Posterior vena cava (tissue), 2 donors: ENCODE measurements at regions of chr7 and their contacts with region 1.

Region 1: DNA sequence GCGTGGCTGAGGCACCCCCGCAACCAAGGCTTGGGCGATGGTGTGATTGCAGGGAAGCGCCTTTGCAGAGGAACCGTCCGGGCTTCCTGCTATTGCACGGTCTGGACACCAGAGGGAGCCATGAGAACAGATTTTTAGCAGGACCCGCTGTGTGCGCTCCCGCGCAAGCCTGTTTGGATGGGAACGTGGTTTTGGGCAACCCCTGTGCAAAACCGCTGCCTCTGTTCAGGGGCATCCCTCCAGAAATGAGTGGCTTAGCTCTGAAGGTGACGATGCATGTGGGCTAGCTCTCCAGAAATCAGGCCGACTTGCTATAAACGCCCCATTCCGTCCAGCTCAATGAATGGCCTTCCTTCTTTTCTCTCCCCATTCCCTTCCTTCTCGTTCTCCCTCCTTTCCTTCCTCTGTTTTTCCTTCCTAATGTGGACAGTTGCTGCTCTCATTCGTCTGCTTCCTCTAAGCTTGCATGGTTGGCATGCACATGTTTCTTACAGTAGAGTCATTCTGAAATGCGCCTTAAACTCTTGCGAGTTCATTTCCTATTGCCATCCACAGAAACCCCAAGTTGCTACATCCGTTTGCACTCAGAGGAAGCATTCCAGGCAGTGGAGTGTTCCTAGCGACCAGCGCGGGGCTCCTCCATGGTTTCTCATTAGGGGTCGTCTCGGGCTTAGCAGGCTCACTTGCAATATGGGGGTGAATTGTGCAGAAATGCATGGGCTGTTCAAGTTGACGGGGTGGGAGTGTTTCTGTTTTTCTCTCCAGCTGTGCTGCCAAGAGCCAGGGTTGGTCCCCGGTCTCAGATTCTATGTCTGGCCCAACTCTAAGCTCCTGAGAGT is 302.5 kb upstream of the GALNT17 start:
- DNase-seq: peak; percentile 87

Region 2: DNA sequence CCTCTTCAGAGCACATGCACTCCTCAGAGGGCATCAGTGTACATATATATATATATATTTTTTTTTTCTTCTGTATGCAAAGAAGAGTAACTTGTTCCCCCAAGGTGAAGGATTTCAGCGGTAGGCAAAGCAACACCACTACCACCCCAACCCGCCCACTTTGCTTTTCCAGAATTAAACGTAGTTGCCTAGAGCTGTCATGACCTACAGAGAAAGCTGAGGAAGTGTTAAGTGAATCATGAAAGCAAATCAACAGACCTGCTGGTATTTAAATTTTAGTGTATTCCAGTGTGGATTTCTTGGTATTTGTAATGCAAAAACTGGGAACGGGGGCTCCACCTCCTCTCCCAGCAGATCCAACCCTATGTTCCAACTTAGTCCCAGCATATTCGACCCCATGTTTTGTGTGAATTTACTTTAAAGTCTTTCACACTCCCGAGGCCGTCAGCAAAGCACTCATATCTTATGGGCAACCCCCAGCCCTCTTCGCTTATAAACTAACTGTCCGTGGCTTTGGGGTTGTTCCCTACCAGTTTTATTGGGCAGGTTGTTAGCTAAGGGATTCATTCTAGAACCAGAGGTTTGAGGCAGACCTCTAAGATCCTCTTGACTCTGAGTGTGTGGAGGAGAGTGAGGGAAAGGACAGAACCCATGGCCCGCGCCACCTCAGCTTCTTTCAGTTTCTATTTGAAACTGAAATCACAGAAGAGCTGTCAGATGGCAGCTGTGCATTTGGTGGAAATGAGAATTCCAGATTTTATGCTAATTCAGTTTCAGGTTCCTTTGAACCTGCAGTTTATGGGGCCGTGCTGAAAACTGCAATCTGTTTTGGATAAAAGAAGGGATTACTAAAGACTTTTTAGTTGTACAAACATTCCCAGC is 147.7 kb before region 1 on chr7:
- intact Hi-C with region 1: no loop called
- DNase-seq: no peak

Region 3: DNA sequence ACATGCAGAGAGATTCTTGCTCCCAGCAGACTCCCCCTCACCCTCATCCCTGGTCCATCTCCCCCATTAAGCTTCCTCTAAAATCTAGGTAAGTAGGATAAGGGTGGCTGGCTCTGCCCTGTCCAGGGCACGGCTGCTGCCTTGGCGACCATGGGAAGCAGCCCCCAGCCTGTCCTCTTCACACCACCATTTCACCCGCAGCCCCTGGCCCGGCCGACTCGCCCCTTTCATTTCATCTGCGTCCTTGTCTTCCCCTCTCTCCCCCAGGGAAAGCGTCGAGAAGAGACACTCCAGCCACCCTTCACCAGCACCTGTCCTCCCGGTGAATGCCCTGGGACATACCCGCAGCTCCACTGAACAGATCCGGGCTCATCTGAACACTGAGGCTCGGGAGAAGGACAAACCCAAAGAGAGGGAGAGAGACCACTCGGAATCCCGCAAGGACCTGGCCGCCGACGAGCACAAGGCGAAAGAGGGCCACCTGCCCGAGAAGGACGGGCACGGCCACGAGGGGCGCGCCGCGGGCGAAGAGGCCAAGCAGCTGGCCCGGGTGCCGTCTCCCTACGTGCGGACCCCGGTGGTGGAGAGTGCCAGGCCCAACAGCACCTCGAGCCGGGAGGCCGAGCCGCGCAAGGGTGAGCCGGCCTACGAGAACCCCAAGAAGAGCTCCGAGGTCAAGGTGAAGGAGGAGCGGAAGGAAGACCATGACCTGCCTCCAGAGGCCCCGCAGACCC is 39.8 kb before region 1 on chr7:
- intact Hi-C with region 1: loop called in 1 of 2 experiments (anchors 1 kb)
- DNase-seq: no peak

Region 4: DNA sequence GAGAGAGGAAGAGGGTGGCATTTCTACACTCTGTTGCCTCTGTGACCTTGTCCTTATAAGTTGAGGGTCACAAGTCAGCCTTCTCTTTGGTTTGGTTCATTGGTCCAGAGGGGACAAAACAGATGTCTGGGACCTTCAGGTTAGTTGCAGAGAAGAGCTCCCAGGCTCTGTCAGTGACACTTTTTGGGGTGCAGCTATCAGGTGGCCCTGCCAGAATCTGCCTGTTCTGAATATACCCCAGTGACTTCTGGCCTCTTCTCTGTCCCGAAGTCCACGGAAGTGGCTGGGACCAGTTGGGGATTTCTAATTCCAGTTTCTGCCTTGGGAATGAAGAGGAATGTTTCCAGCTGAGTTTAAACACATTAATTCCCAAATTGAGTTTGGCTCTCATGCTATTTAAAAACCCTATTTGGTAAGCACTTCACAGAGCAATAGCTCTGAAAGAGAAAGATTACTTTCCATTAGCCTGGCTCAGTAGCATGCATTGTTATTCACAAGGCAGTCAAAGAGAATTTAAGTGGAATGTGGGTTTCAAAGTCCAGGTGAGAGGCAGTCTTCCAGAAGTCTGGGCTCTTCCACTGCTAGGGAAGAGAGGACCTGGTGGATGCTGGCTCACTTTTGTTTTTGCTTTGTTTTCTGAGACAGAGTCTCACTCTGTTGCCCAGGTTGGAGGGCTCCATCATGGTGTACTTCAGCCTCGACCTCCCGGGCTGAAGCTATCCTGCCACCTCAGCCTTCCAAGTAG is 64.7 kb after region 1 on chr7:
- intact Hi-C with region 1: no loop called
- DNase-seq: no peak

Region 5: DNA sequence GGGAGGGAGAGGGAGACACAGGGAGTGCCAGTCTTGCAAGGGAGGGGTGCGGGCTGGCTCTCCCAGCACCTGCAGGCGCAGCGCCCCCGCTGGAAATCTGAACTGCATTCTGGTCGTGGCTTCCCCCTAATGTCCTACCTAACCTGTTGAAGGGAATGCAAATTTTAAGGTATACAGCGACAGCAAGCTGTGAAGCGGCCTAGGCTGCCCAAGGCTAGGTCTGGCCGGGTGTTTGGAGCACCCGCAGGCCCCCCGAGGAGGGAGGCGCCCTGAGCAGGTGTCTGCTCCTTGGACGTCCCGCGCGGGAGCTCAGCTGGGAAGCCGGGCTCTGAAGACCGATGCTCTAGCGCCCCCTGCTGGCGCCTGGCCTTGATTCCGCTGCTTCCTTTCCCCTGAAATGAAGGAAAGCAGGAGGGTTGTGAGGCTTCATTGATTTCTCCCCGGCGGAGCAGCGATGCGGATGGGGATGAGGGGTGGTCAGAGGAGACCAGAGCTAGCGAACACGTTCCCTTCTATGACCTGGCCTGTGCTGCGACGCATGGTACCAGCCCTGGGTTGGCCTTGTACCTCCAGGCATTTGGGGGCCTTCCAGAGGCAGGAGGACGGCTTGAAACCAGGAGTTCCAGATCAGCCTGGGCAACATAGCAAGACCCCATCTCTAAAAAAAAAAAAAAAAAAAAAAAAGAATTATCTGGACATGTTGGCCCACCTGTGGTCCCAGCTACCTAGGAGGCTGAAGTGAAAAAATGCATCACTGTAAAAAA is 903.8 kb after region 1 on chr7:
- intact Hi-C with region 1: loop called in 1 of 2 experiments (anchors 10 kb)
- DNase-seq: peak; percentile 95